ENCODE measurements at regions of chr1 and their contacts with region 1.

Region 1: DNA sequence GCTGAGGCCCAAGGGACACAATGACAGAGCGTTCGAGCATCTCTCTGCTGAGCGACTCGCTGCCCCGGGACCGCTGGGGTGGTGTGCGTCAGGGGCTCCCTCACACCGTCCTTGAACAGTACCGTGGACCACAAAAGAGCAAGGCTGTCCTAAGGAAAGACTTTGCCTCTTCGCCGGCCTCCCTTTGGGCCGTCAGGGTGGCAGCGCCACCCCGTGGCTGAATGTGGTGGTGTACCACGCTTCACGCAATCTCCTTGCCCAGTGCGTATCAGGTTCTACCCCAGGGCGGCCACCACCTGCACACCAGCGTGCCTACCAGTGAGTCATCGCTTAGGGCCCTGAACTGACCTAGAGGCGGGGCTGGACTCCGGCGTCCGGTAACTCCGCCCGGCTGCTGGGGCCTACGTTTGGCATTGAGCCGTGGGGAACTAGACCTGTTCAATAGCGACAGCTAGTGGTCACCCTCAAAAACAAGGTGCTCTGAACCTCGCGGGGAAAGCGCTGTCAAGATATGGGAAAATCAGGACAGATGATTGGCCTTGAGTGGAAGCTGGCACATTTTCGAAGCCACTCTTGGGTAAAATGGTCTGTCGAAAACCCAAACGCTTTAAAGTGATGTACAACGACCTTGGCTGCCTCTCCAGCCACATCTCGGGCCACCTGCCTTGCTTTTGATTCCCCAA is 8.1 kb upstream of the TRAF3IP3 start:
- DNase-seq: peak; percentile 89
- ATAC-seq: peak; percentile 94
- H3K4me3 ChIP-seq: peak overlapping the region; percentile 6; the same call in 1 of the 2 replicates
- H3K27ac ChIP-seq: no peak overlapping the region
- H3K4me1 ChIP-seq: peaks cover 3% of the 10 kb centered on the region; the same call in 1 of the 2 replicates
- H3K27me3 ChIP-seq: 0 out of 2 replicates have a peak, but pooled peaks cover 1% of the 10 kb centered on the region
- CTCF ChIP-seq: peak; percentile 65
- POLR2A ChIP-seq: no peak
- RAD21 ChIP-seq: peak; percentile 43

Region 2: GRCh38 chr1:209565759-209566678 is 181.7 kb before region 1 on chr1:
- CTCF ChIA-PET with region 1: no interaction called
- POLR2A ChIA-PET with region 1: no interaction called
- dilution Hi-C with region 1: no loop called
- in situ Hi-C with region 1: no loop called
- intact Hi-C with region 1: loop called (anchors 1 kb)
- DNase-seq: peak; percentile 75
- ATAC-seq: peak; percentile 98
- H3K4me3 ChIP-seq: no peak overlapping the region
- H3K27ac ChIP-seq: no peak overlapping the region
- H3K4me1 ChIP-seq: no peaks in the 10 kb centered on the region
- H3K27me3 ChIP-seq: peaks cover 19% of the 10 kb centered on the region
- CTCF ChIP-seq: peak; percentile 73
- POLR2A ChIP-seq: no peak
- RAD21 ChIP-seq: peak; percentile 58

Region 3: GRCh38 chr1:209576798-209577197 is 170.9 kb before region 1 on chr1:
- CTCF ChIA-PET with region 1: no interaction called
- POLR2A ChIA-PET with region 1: no interaction called
- dilution Hi-C with region 1: no loop called
- in situ Hi-C with region 1: no loop called
- intact Hi-C with region 1: loop called (anchors 1 kb)
- DNase-seq: peak; percentile 58
- ATAC-seq: peak; percentile 99
- H3K4me3 ChIP-seq: no peak overlapping the region
- H3K27ac ChIP-seq: no peak overlapping the region
- H3K4me1 ChIP-seq: no peaks in the 10 kb centered on the region
- H3K27me3 ChIP-seq: peaks cover 14% of the 10 kb centered on the region
- CTCF ChIP-seq: peak; percentile 91
- POLR2A ChIP-seq: no peak; the same call in 1 of the 2 replicates
- RAD21 ChIP-seq: peak; percentile 89

Region 4: DNA sequence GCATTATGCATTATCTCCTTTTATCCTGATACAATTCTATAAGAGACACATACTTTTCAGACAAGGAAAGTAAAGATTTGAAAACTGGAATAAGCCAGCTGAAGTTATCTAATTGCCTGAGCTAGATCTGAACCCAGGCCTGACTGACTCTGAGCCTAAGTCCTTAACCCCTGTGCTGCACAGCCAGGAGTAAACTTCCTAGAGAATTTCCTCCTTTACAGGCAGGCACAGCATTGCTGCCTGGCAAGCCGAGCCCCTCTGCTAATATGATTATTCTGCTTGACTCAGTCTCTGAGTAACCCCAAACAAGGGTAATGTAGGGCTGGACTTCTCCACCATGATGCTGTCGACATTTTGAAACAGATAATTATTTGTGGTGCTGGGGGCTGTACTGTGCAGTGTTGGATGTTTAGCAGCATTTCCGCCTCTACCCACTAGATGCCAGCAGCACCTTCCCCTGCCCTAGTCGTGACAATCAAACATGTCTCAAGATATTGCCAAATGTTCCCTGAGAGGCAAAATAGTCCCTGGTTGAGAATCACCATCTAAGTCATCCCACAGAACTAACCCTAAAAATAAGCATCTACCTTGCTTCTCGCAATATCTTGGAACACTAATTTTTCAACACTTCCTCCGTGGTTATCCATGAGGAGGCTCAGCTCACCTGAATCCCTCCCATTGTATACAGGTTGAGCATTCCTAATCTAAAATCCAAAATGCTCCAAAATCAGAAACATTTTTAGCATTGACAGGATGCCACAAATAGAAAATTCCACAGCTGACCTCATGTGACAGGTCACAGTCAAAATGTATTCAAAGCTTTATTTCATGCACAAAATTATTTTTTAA is 145.7 kb before region 1 on chr1:
- CTCF ChIA-PET with region 1: no interaction called
- POLR2A ChIA-PET with region 1: no interaction called
- dilution Hi-C with region 1: no loop called
- in situ Hi-C with region 1: no loop called
- intact Hi-C with region 1: loop called (anchors 1 kb)
- DNase-seq: peak; percentile 45
- ATAC-seq: peak; percentile 85
- H3K4me3 ChIP-seq: no peak overlapping the region
- H3K27ac ChIP-seq: no peak overlapping the region
- H3K4me1 ChIP-seq: no peaks in the 10 kb centered on the region
- H3K27me3 ChIP-seq: no peaks in the 10 kb centered on the region; the same call in 1 of the 2 replicates
- CTCF ChIP-seq: peak; percentile 60
- POLR2A ChIP-seq: no peak
- RAD21 ChIP-seq: peak; percentile 65

Region 5: GRCh38 chr1:209648931-209649776 is 98.6 kb before region 1 on chr1:
- CTCF ChIA-PET with region 1: interaction called, 3 read pairs
- POLR2A ChIA-PET with region 1: no interaction called
- dilution Hi-C with region 1: no loop called
- in situ Hi-C with region 1: no loop called
- intact Hi-C with region 1: loop called (anchors 5 kb)
- DNase-seq: peak; percentile 96
- ATAC-seq: peak; percentile 75
- H3K4me3 ChIP-seq: no peak overlapping the region
- H3K27ac ChIP-seq: peak overlapping the region; percentile 84
- H3K4me1 ChIP-seq: peaks cover 25% of the 10 kb centered on the region
- H3K27me3 ChIP-seq: no peaks in the 10 kb centered on the region; the same call in 1 of the 2 replicates
- CTCF ChIP-seq: no peak
- POLR2A ChIP-seq: no peak
- RAD21 ChIP-seq: no peak

Region 6: DNA sequence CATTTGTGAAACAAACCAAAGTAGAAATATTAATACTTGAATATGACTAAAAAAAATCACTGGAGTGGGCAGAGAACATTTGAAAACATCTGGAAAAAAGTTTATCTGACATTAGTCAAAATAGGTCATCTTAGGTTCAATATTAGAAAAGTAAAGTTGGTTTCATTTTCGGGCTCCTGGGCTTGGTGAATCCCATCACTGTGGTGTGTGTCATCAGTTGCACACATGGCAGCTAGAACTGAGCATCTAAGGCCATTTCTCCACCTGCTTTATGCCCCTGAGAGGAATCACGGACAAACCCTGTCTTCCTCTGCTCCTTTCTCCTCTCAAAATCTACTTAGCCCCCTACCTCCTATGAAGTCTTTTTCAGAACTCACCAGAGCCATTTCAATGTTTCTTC is 37.6 kb before region 1 on chr1:
- CTCF ChIA-PET with region 1: no interaction called
- POLR2A ChIA-PET with region 1: no interaction called
- dilution Hi-C with region 1: no loop called
- in situ Hi-C with region 1: no loop called
- intact Hi-C with region 1: no loop called
- DNase-seq: no peak
- ATAC-seq: no peak
- H3K4me3 ChIP-seq: no peak overlapping the region
- H3K27ac ChIP-seq: no peak overlapping the region
- H3K4me1 ChIP-seq: no peaks in the 10 kb centered on the region; the same call in 1 of the 2 replicates
- H3K27me3 ChIP-seq: no peaks in the 10 kb centered on the region
- CTCF ChIP-seq: no peak
- POLR2A ChIP-seq: no peak
- RAD21 ChIP-seq: no peak

Region 7: DNA sequence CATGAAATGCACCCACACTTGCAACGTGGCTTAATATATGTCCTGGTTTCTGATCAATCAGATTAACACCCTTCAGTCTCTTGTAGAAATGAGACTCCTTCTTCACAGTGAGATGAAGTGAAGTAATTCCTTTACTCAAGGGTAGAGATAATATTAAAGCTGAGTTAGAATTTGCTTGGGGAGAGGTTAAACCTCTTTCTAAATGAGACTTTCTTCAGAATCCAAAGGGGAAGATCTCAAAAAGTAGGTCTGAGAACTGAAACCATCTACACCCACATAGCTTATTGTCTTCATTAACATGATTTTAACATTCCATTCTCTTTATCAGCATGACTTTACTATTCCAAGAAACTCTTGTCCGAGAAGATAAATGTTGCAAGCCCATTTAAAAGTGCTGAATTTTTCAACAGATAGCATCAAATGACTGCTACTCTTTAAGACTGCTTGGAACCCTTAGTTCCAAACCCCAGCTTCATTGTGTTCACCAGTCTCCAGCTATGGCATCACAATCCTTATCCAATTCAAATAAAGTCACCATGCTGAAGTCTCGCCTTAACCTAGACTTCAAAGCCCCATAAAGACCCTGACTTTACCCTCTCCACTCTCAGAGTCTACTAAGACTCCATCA is 11.1 kb before region 1 on chr1:
- CTCF ChIA-PET with region 1: interaction called, 10 read pairs
- POLR2A ChIA-PET with region 1: no interaction called
- dilution Hi-C with region 1: no loop called
- in situ Hi-C with region 1: no loop called
- intact Hi-C with region 1: no loop called
- DNase-seq: no peak
- ATAC-seq: no peak
- H3K4me3 ChIP-seq: no peak overlapping the region
- H3K27ac ChIP-seq: no peak overlapping the region
- H3K4me1 ChIP-seq: peaks cover 1% of the 10 kb centered on the region; the same call in 1 of the 2 replicates
- H3K27me3 ChIP-seq: peaks cover 4% of the 10 kb centered on the region
- CTCF ChIP-seq: no peak
- POLR2A ChIP-seq: no peak
- RAD21 ChIP-seq: no peak

Region 8: DNA sequence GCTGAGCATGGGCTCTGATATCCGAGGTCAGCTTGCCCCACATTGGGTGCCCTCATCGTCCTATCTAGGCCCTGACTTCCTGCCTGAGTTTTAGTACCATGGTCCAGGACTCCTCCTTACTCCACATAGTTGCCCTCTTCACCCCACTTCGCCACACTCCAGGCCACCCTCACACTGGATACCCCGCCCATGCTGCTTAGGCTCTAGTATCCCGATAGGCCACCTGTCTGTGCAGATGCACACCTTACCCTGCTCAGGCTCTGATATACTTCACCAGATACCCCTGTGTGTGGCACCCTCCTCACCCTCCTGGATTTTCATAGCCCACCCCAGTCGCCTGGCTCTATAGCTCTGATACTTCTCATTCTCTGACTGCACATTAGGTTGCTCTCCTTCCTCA is 339.3 kb after region 1 on chr1:
- CTCF ChIA-PET with region 1: no interaction called
- POLR2A ChIA-PET with region 1: no interaction called
- dilution Hi-C with region 1: no loop called
- in situ Hi-C with region 1: no loop called
- intact Hi-C with region 1: no loop called
- DNase-seq: no peak
- ATAC-seq: no peak
- H3K4me3 ChIP-seq: no peak overlapping the region
- H3K27ac ChIP-seq: no peak overlapping the region
- H3K4me1 ChIP-seq: no peaks in the 10 kb centered on the region
- H3K27me3 ChIP-seq: no peaks in the 10 kb centered on the region
- CTCF ChIP-seq: no peak
- POLR2A ChIP-seq: no peak
- RAD21 ChIP-seq: no peak